GM18951 (cell line): ENCODE measurements at regions of chr1 and their contacts with region 1.

Region 1: DNA sequence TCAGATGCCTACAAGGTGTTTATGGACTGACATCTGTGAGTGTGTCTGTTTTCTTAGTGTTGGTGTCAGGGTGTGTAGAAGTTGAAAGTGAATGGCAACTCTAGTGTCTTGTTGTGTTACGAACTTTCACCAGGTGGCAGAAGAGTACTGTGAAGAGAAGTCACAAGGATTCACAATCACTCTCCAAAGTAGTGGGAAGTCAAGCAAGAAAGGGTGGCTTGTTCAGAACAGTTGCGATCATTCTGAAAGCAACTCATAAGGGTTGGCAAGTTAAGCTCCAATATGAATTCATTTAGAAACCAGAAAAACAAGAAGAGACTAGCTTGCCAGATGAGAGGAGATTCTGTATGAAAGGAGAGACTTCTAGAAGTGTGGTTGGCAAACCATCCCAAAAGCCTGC is 86.1 kb downstream of the FASLG start:
- POLR2A ChIP-seq: no peak

Region 2: GRCh38 chr1:173202430-173203145 is 457.6 kb after region 1 on chr1:
- in situ Hi-C with region 1: loop called (anchors 5 kb)
- POLR2A ChIP-seq: no peak

Region 3: DNA sequence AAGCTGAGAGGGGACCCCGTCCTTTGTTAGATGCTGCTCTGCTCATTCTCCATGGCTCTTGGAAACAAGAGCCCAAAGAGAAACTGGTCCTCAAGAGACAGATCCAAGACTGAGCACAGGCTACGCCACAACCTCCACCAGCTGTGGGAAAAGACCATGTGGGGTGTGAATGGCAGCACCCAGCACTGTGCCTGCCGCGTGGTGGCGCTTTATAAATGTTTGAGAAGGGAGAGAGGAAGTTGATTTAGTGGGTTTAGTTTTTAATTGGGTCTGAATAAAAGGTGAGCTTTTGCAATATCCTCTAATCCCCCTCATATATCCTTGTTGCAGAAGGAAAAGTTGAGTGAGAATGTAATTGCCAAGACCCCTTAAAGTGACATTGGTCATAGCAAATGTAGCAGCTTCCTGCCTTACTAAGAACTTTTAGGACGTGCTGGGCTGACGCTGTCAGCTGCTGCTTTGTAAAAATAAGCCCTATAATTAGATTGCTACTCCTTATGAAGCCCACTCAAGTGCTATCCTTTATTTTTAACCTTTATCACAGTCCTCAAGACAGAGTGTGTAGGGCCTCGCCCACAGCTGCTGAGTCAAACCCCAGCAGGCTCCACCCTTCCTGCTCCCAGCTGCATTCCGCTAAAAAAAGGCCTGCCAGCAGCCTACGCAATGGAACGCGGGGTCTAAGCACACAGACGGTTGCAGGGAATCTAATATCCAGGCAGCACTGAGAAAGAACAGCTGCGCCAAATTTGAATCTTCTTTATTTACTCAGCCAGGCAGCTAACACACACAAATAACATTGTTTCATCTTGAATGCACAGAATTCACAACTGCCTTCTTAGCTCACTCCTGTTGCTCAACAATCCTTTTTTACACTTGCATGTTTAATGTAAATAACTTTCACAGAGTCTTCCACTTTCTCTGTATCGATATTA is 684.7 kb after region 1 on chr1:
- in situ Hi-C with region 1: loop called (anchors 10 kb)
- POLR2A ChIP-seq: no peak

Region 4: DNA sequence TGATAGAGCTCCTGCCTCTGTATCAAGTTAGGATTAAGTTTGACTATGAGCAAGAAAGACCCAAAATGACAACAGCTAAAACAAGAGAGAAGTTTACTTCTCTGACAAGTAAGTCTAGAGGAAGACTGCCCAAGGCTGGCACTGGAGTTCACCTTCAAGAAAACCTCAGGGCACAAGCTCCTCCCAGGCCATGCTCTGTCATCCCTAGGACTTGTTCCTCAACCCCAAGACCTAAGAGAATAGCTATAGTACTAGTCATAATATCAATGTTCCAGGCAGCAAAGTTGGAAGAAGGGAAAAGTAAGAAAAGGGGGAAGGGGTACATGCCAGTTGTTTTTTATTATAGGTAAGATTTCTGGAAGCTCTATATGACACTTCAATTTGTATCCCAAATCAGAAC is 1053.1 kb after region 1 on chr1:
- in situ Hi-C with region 1: loop called (anchors 25 kb)
- POLR2A ChIP-seq: no peak

Region 5: DNA sequence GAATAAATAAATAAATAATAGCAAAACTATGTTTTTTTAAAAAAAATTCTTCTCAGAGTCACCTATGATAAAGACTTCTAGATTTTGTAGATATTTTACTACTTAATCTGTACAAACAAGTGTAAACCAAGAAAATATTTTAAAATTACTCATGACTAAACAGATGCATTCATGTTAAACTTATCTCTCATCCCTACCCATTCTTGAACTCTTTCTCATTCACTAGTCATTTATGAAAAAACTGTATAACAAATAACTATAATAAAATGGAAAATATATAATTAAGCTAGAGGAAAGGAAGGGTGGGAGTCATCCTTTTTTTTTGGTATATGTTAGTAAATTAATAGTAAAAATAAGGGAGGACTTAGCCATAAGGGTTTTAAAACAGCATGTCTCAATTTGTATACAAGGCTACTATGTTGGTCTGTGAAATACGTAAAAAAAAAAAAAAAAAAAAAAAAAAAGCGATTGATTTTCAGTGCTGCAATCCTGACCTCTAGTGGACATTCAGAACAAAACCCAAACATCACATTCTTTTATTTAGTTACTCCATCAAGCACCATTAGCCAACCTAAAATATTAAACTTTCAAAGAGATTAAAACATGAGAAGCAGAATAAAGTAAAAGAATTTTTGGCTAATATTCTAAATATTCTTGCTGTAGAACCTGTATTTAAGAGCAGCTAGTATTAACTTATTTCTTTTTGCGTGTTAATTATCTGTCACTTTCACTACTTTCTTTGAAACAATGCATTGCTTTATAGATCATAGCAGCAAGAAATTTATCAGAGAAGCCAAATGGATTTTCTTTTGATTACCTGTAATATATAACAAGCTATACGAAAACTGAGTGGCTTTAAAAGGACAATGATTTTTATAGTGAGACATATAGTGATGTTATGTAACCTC is 1998.9 kb after region 1 on chr1:
- in situ Hi-C with region 1: loop called (anchors 25 kb)
- POLR2A ChIP-seq: no peak